Esophagus muscularis mucosa (tissue), 4 donors: ENCODE measurements at regions of chr3 and their contacts with region 1.

Region 1: DNA sequence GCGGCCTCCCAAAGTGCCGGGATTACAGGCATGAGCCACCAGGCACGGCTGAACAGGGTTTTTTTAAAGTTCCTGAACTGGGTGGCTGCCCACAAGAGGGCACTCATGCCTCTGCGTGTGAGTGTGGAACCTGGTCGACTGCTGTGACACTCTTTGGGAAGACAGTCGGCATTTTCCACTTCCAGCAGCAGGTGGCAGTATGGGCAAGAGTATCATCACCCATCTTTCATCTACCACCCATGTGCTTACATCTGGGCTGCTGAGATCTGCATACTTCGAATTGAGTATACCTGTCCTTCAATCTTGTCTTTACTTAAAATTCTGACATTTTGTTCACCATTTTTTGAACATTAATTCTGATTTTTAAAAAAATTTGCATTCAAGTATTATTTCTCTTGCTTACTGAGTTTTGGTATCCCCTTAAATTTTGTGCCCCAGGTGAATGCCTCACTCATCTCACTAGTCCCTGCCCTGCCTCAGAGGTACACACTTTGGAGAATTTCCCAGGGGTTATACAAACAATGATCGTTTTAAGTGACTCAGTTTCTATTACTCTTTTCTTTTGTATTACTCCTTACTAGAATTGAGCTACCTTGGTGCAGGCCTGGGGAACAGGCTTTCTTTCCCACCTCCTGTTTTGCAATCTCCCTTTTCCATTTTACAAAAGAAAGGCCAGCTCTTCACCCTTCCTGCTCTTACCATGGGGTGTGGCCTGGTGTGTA is 11.8 kb downstream of the CLEC3B start:
- DNase-seq: peak; percentile 99
- H3K4me3 ChIP-seq: peak overlapping the region in 1 of 4 donors; percentile 3
- H3K27ac ChIP-seq: peak overlapping the region in 3 of 4 donors; percentile 74 to 80 (median 76)
- H3K4me1 ChIP-seq: peaks cover 36 to 57% (median 49%) of the 10 kb centered on the region in 4 donors
- H3K27me3 ChIP-seq: no peaks in the 10 kb centered on the region
- CTCF ChIP-seq: peak; percentile 87 to 98 (median 88)
- EP300 ChIP-seq: no peak
- POLR2A ChIP-seq: no peak

Region 2: GRCh38 chr3:45210308-45211041 is 172.6 kb after region 1 on chr3:
- intact Hi-C with region 1: loop called (anchors 1 kb)
- DNase-seq: no peak
- H3K4me3 ChIP-seq: no peak overlapping the region
- H3K27ac ChIP-seq: peak overlapping the region in 3 of 4 donors; percentile 28 to 54 (median 48)
- H3K4me1 ChIP-seq: peaks cover 0 to 31% (median 30%) of the 10 kb centered on the region in 4 donors
- H3K27me3 ChIP-seq: no peaks in the 10 kb centered on the region
- CTCF ChIP-seq: peak; percentile 85 to 89 (median 87)
- EP300 ChIP-seq: no peak
- POLR2A ChIP-seq: no peak

Region 3: GRCh38 chr3:45499529-45499928 is 461.6 kb after region 1 on chr3:
- intact Hi-C with region 1: loop called (anchors 5 kb)
- DNase-seq: no peak
- H3K4me3 ChIP-seq: no peak overlapping the region
- H3K27ac ChIP-seq: no peak overlapping the region
- H3K4me1 ChIP-seq: peaks cover 0 to 16% (median 2%) of the 10 kb centered on the region in 4 donors
- H3K27me3 ChIP-seq: no peaks in the 10 kb centered on the region
- CTCF ChIP-seq: peak; percentile 44 to 53 (median 51)
- EP300 ChIP-seq: no peak
- POLR2A ChIP-seq: no peak

Region 4: GRCh38 chr3:45665101-45665572 is 627.2 kb after region 1 on chr3:
- intact Hi-C with region 1: loop called (anchors 5 kb)
- DNase-seq: no peak
- H3K4me3 ChIP-seq: peak overlapping the region in 3 of 4 donors; percentile 14 to 24 (median 23)
- H3K27ac ChIP-seq: no peak overlapping the region
- H3K4me1 ChIP-seq: peaks cover 38 to 57% (median 53%) of the 10 kb centered on the region in 4 donors
- H3K27me3 ChIP-seq: no peaks in the 10 kb centered on the region
- CTCF ChIP-seq: peak; percentile 23 to 51 (median 40)
- EP300 ChIP-seq: no peak
- POLR2A ChIP-seq: no peak